Calu3 (cell line): ENCODE measurements at regions of chr3 and their contacts with region 1.

Region 1: GRCh38 chr3:33636125-33636850 is 81.8 kb downstream of the CLASP2 start:
- DNase-seq: peak; percentile 6
- H3K4me3 Mint-ChIP-seq: no peak overlapping the region
- H3K27ac Mint-ChIP-seq: no peak overlapping the region
- H3K4me1 Mint-ChIP-seq: peaks cover 8% of the 10 kb centered on the region
- H3K27me3 Mint-ChIP-seq: no peaks in the 10 kb centered on the region
- CTCF ChIP-seq: peak; percentile 7

Region 2: GRCh38 chr3:33525232-33525631 is 111.1 kb before region 1 on chr3:
- CTCF ChIA-PET with region 1: no interaction called
- intact Hi-C with region 1: no loop called
- DNase-seq: no peak
- H3K4me3 Mint-ChIP-seq: no peak overlapping the region
- H3K27ac Mint-ChIP-seq: no peak overlapping the region
- H3K4me1 Mint-ChIP-seq: no peaks in the 10 kb centered on the region
- H3K27me3 Mint-ChIP-seq: no peaks in the 10 kb centered on the region
- CTCF ChIP-seq: no peak

Region 3: GRCh38 chr3:33612607-33613006 is 23.7 kb before region 1 on chr3:
- CTCF ChIA-PET with region 1: no interaction called
- intact Hi-C with region 1: no loop called
- DNase-seq: no peak
- H3K4me3 Mint-ChIP-seq: no peak overlapping the region
- H3K27ac Mint-ChIP-seq: no peak overlapping the region
- H3K4me1 Mint-ChIP-seq: no peaks in the 10 kb centered on the region
- H3K27me3 Mint-ChIP-seq: no peaks in the 10 kb centered on the region
- CTCF ChIP-seq: no peak

Region 4: DNA sequence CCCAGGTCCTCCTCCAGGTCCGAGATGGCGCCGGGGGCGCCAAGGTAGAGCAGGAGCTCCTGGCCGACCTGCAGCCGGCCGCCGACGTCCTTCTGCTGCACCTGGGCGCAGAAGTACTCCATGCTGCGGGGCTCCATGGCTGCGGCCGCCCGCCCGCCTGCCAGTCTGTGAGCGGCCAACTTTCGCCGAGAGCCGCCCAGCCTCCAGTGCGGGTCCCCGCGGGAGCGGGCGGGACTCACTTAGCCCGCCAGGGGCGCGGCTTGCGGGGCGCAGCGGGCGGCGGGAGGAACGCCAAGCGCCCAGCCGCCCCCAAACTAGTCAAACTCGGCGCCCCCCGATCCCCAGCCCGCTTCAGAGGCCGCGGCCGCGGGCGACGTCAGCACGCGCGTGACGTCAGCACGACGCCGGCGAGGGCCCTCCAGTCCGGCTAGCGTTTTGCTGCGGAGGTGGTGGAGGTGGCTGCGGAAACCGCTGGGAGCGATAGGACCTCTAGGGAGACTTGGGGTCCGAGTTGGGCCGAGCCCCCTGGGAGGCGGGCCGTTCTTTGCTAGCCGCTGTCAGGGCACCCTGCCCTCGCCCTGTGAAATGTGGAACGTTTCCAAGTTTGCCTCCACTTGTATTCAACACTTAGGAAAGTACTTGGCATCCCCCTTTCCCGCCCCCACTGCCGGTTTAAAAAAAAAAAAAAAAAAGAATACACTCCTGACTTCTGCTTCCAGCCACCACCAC is 81.7 kb after region 1 on chr3 and contains the start of gene CLASP2:
- CTCF ChIA-PET with region 1: no interaction called
- intact Hi-C with region 1: loop called (anchors 1 kb)
- DNase-seq: peak; percentile 86
- H3K4me3 Mint-ChIP-seq: no peak within 1 kb of the TSS
- H3K27ac Mint-ChIP-seq: peak within 1 kb of the TSS; percentile 85
- H3K4me1 Mint-ChIP-seq: no peaks in the 10 kb centered on the region
- H3K27me3 Mint-ChIP-seq: no peaks in the 10 kb centered on the region
- CTCF ChIP-seq: no peak
- total RNA-seq, gene CLASP2: 42.4 and 56.4 TPM in 2 replicates

Region 5: DNA sequence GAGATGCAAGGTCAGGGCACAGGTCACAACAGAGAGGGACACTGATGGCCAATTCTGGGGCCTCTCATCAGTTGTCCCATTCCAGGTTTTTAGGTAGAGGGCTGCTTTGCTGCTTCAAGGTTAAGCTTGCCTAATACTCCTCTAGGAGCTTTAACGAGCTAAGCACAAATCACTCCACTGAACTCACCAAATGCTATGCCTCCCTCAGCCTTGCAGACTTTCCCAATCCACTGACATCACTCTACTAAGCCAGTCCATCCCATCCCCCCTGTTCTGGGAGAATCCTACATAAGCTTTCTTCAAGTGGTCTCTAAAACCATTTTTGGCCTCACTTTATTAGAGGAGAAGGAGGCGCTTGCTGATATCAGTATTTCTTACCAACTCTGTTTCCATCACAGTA is 137.3 kb after region 1 on chr3:
- CTCF ChIA-PET with region 1: no interaction called
- intact Hi-C with region 1: loop called (anchors 1 kb)
- DNase-seq: no peak
- H3K4me3 Mint-ChIP-seq: no peak overlapping the region
- H3K27ac Mint-ChIP-seq: no peak overlapping the region
- H3K4me1 Mint-ChIP-seq: no peaks in the 10 kb centered on the region
- H3K27me3 Mint-ChIP-seq: no peaks in the 10 kb centered on the region
- CTCF ChIP-seq: no peak

Region 6: DNA sequence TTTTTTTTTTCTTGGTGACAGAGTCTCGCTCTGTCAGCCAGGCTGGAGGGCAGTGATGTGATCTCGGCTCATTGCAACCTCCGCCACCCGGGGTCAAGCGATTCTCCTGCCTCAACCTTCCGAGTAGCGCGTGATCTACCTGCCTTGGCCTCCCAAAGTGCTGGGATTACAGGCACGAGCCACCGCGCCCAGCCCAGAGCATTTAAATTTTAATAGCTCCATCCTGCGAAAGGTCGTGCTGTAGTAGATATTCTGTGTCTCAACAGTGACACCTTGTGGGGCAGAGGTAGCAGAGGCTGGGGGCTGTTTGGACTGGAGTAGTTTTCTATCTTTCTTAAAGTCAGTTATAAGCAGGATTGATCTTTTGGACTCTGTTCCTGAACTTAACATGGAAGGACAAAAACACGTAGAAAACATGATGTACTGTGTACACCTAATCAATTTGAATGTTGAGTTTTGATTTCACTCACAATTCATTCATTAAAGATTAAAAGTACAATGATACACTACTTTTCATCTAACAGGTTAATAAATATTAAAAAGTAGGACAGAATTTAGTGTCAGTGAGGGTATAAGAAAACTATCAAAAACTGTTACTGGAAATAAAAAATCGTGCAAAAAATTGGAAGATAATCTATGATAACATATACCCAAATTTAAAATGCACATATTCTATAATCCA is 151.2 kb after region 1 on chr3:
- CTCF ChIA-PET with region 1: interaction called, 7 read pairs
- intact Hi-C with region 1: loop called (anchors 1 kb)
- DNase-seq: peak; percentile 54
- H3K4me3 Mint-ChIP-seq: peak overlapping the region; percentile 34
- H3K27ac Mint-ChIP-seq: no peak overlapping the region
- H3K4me1 Mint-ChIP-seq: peaks cover 9% of the 10 kb centered on the region
- H3K27me3 Mint-ChIP-seq: no peaks in the 10 kb centered on the region
- CTCF ChIP-seq: peak; percentile 33